Activated CD4-positive, alpha-beta memory T cell treated with anti-CD3 and anti-CD28 coated beads, Interleukin-2, amount 10 ng/mL, durations not matched to agents 7 days and 5 days (primary cell): ENCODE measurements at regions of chr13 and their contacts with region 1.

Region 1: GRCh38 chr13:48580185-48580803 is 47.4 kb upstream of the RCBTB2 start:
- DNase-seq: peak; percentile 72
- H3K4me3 Mint-ChIP-seq: no peak overlapping the region
- H3K27ac Mint-ChIP-seq: no peak overlapping the region
- H3K4me1 Mint-ChIP-seq: peaks cover 38% of the 10 kb centered on the region
- H3K27me3 Mint-ChIP-seq: peaks cover 39% of the 10 kb centered on the region

Region 2: GRCh38 chr13:48400850-48401291 is 179.4 kb before region 1 on chr13:
- CTCF ChIA-PET with region 1: interaction called, 28 read pairs
- POLR2A ChIA-PET with region 1: interaction called, 7 read pairs
- DNase-seq: no peak
- H3K4me3 Mint-ChIP-seq: peak overlapping the region; percentile 38
- H3K27ac Mint-ChIP-seq: peak overlapping the region; percentile 74
- H3K4me1 Mint-ChIP-seq: peaks cover 61% of the 10 kb centered on the region
- H3K27me3 Mint-ChIP-seq: no peaks in the 10 kb centered on the region

Region 3: GRCh38 chr13:48492470-48493065 is 87.7 kb before region 1 on chr13:
- CTCF ChIA-PET with region 1: interaction called, 32 read pairs
- POLR2A ChIA-PET with region 1: interaction called, 15 read pairs
- DNase-seq: peak; percentile 85
- H3K4me3 Mint-ChIP-seq: no peak overlapping the region
- H3K27ac Mint-ChIP-seq: no peak overlapping the region
- H3K4me1 Mint-ChIP-seq: peaks cover 69% of the 10 kb centered on the region
- H3K27me3 Mint-ChIP-seq: no peaks in the 10 kb centered on the region

Region 4: GRCh38 chr13:48542581-48543341 is 37.5 kb before region 1 on chr13:
- CTCF ChIA-PET with region 1: interaction called, 10 read pairs
- POLR2A ChIA-PET with region 1: no interaction called
- DNase-seq: no peak
- H3K4me3 Mint-ChIP-seq: no peak overlapping the region
- H3K27ac Mint-ChIP-seq: no peak overlapping the region
- H3K4me1 Mint-ChIP-seq: peaks cover 4% of the 10 kb centered on the region
- H3K27me3 Mint-ChIP-seq: peaks cover 2% of the 10 kb centered on the region

Region 5: GRCh38 chr13:48679911-48680680 is 99.8 kb after region 1 on chr13:
- CTCF ChIA-PET with region 1: no interaction called
- POLR2A ChIA-PET with region 1: no interaction called
- DNase-seq: no peak
- H3K4me3 Mint-ChIP-seq: no peak overlapping the region
- H3K27ac Mint-ChIP-seq: no peak overlapping the region
- H3K4me1 Mint-ChIP-seq: peaks cover 7% of the 10 kb centered on the region
- H3K27me3 Mint-ChIP-seq: no peaks in the 10 kb centered on the region